Heart right ventricle (tissue), 16 donors: ENCODE measurements at regions of chr19 and their contacts with region 1.

Region 1: GRCh38 chr19:18675779-18676178 is 7.7 kb upstream of the CRTC1 start:
- DNase-seq: no peak
- ATAC-seq: no peak
- H3K4me3 ChIP-seq: no peak overlapping the region
- H3K27ac ChIP-seq: no peak overlapping the region
- H3K4me1 ChIP-seq: peaks cover 0 to 30% (median 12%) of the 10 kb centered on the region in 9 donors
- H3K27me3 ChIP-seq: no peaks in the 10 kb centered on the region
- CTCF ChIP-seq: peak in 7 of 9 donors; percentile 28 to 49 (median 44)

Region 2: DNA sequence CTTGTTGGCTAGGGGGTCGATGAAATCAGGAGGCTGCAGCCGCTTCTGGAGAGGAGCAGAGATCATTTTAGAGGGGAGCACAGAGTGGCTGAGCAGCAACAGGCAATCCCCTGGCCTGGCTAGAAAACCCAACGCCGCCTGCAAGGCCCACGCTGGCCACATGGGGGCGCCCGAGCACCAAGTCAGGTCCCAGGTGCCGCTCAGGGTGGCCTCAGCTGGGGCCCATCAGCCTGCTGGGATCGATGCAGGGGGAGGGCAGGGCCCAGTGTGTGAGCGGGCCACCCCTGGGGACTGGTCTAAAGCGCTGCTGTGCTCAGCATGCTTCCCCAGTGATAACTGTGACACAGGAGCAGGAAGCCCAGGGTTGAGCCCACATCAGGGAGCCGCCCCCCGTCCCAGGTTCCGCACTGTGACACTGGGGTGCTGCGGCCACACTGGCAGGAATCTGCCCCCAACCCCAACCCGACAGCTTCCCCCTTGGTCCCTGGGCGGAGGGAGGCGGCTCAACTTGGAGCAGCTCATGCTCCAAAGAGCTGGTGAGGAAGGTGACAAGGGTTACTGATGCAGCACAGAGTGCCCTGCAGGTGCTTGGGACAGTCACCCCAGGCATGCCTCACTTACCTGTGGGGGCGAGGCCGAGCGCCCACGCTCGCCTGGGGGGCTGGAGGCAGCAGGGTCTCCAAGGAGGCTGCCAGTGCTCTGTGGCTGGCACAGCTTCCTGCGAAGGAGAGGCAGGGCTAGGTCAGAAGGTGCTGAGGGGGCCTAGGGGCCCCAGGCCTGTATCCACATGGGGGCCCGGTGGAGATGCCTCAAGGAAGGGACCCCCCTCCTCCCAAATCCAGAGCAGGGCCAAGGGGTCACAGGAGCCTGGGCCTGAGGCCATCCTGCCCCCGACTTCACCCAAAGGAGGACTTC is 224.6 kb before region 1 on chr19:
- intact Hi-C with region 1: loop called in 3 of 10 experiments (anchors 10 kb)
- DNase-seq: peak; percentile 86 to 91
- ATAC-seq: peak; percentile 78 to 91 (median 86)
- H3K4me3 ChIP-seq: no peak overlapping the region
- H3K27ac ChIP-seq: no peak overlapping the region
- H3K4me1 ChIP-seq: peaks cover 0 to 17% (median 9%) of the 10 kb centered on the region in 9 donors
- H3K27me3 ChIP-seq: no peaks in the 10 kb centered on the region
- CTCF ChIP-seq: peak; percentile 97 to 99 (median 98)

Region 3: GRCh38 chr19:18589380-18590272 is 86.2 kb before region 1 on chr19:
- intact Hi-C with region 1: loop called in 6 of 10 experiments (anchors 2 to 10 kb)
- DNase-seq: peak; percentile 63 to 71
- ATAC-seq: peak; percentile 48 to 80 (median 69)
- H3K4me3 ChIP-seq: peak overlapping the region; percentile 63 to 95 (median 86)
- H3K27ac ChIP-seq: peak overlapping the region; percentile 55 to 97 (median 92)
- H3K4me1 ChIP-seq: peaks cover 3 to 55% (median 29%) of the 10 kb centered on the region in 9 donors
- H3K27me3 ChIP-seq: peaks cover 0 to 3% (median 0%) of the 10 kb centered on the region in 7 donors
- CTCF ChIP-seq: peak in 5 of 9 donors; percentile 8 to 41 (median 26)

Region 4: DNA sequence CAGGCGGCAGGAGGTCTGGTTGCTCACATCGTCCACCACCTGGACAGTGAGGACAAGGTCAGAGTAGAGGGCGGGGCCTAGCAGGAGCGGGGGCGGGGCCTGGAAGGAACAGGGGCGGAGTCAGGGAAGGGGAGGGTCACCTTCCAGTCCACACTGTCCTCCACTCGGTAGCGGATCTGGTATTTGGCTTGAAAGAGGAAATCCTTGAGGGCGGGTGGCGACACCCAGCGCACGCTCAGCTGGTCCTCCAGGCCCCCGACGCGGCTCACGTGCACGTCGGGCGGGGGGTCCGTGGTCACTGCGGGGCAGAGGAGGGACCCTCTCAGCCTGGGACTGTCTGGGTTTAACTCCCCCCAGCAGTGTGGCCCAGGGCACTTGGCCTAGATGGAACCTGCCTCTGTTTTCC is 79.0 kb before region 1 on chr19:
- intact Hi-C with region 1: loop called in 9 of 10 experiments (anchors 2 to 10 kb)
- DNase-seq: peak in 1 of 2 donors; percentile 60
- ATAC-seq: peak in 3 of 8 donors; percentile 27 to 44 (median 43)
- H3K4me3 ChIP-seq: no peak overlapping the region
- H3K27ac ChIP-seq: no peak overlapping the region
- H3K4me1 ChIP-seq: peaks cover 10 to 27% (median 17%) of the 10 kb centered on the region in 9 donors
- H3K27me3 ChIP-seq: peaks cover 0 to 65% (median 56%) of the 10 kb centered on the region in 7 donors
- CTCF ChIP-seq: no peak

Region 5: GRCh38 chr19:18831524-18832305 is 155.9 kb after region 1 on chr19 and contains the start of gene UPF1:
- intact Hi-C with region 1: loop called in 5 of 10 experiments (anchors 5 to 10 kb)
- DNase-seq: peak; percentile 93 to 98
- ATAC-seq: peak; percentile 92 to 97 (median 96)
- H3K4me3 ChIP-seq: peak within 1 kb of the TSS; percentile 69 to 99 (median 90)
- H3K27ac ChIP-seq: peak within 1 kb of the TSS in 9 of 10 donors; percentile 84 to 96 (median 86)
- H3K4me1 ChIP-seq: peaks cover 13 to 49% (median 44%) of the 10 kb centered on the region in 9 donors
- H3K27me3 ChIP-seq: peaks cover 0 to 6% (median 0%) of the 10 kb centered on the region in 7 donors
- CTCF ChIP-seq: peak in 3 of 9 donors; percentile 9 to 24 (median 18)
- total RNA-seq, gene UPF1: 32.3 to 44.3 (median 37.5) TPM